ENCODE measurements at regions of chr6 and their contacts with region 1.

Region 1: DNA sequence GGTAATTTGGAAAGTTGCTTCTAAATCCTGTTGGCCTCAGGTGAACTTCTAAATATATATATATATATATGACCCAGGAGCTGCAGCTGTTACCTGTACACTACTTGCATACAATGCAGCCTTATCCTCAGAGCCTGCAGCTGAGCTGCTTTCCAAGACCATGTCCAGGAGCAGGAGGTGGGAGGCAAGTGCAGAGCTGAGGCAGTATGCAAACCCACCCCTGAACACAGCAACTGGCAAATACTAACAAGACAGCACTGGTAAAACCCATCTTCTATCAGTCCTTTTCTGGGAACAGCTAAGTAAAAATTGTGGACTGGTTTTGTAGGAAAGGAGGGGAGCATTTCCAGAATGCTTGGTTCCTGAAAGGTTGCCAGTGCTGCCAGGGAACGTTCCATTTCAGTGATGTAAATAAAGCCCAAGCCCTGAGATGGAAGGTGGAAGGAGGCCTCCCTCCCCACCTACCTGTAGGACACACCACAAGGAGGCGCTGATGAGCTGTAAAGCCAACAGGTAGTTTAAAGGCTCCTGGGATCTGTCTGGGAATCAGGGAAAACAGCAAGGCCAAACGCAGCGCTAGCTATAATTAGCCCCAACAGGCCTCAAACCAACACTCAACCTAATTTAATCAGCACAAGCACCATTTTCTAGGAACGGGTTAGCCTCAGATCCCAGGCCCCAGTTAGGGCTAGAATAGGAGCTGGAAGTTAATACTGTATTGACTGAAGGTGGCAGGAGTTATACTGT is 93.8 kb upstream of the MAP7 start:
- DNase-seq: peak; percentile 95
- H3K4me3 ChIP-seq: no peak overlapping the region
- H3K27ac ChIP-seq: peak overlapping the region; percentile 68 to 77 (median 72)
- H3K4me1 ChIP-seq: peaks cover 34 to 52% (median 47%) of the 10 kb centered on the region in 4 donors
- H3K27me3 ChIP-seq: no peaks in the 10 kb centered on the region
- CTCF ChIP-seq: peak; percentile 88 to 93 (median 91)
- EP300 ChIP-seq: no peak
- POLR2A ChIP-seq: no peak

Region 2: DNA sequence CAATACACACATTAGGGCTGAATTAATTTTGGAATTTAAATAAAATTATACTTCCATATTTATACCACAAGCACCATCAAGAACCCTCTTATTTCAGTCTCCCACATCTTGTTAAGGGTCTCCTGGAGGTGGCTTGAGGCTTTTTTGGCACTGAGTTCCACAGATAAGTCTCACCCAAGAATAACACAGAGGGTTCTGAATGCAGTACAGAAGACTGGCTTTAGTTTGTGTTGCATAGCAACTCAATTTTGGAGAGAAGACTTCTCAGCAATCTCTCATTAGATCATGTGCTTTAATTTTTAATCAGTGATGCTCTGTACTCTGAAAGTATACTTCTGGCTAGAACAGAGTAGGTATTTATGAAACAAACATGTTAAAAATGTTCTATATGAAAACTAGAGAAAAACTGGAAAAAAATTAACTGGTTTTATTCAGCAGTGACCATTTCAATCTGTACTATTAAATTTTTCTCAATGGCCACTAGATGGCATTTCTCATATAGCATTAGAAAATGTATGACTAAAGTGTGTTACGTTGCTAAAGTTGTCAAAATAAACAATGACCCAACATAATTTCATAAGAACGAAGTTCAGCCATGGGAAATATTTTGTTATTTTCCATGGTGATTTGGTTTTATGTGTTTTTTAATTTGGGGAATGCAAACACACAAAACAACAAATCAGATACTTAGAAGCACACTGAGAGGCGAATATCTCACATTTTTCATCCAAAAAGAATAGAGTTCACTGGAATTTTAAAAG is 61.1 kb before region 1 on chr6:
- intact Hi-C with region 1: loop called (anchors 5 kb)
- DNase-seq: no peak
- H3K4me3 ChIP-seq: no peak overlapping the region
- H3K27ac ChIP-seq: peak overlapping the region; percentile 57 to 71 (median 66)
- H3K4me1 ChIP-seq: peaks cover 19 to 28% (median 22%) of the 10 kb centered on the region in 4 donors
- H3K27me3 ChIP-seq: no peaks in the 10 kb centered on the region
- CTCF ChIP-seq: peak; percentile 56 to 66 (median 59)
- EP300 ChIP-seq: no peak
- POLR2A ChIP-seq: no peak

Region 3: GRCh38 chr6:136792410-136793262 is 148.6 kb after region 1 on chr6 and contains the start of gene MAP3K5:
- intact Hi-C with region 1: loop called (anchors 1 kb)
- DNase-seq: peak; percentile 96
- H3K4me3 ChIP-seq: peak within 1 kb of the TSS; percentile 67 to 93 (median 86)
- H3K27ac ChIP-seq: peak within 1 kb of the TSS; percentile 90 to 97 (median 95)
- H3K4me1 ChIP-seq: peaks cover 3 to 42% (median 37%) of the 10 kb centered on the region in 4 donors
- H3K27me3 ChIP-seq: no peaks in the 10 kb centered on the region
- CTCF ChIP-seq: peak; percentile 68 to 84 (median 74)
- EP300 ChIP-seq: no peak
- POLR2A ChIP-seq: no peak
- total RNA-seq, gene MAP3K5: 18.7 to 24.1 (median 20.7) TPM